ENCODE measurements at regions of chr2 and their contacts with region 1.

Region 1: DNA sequence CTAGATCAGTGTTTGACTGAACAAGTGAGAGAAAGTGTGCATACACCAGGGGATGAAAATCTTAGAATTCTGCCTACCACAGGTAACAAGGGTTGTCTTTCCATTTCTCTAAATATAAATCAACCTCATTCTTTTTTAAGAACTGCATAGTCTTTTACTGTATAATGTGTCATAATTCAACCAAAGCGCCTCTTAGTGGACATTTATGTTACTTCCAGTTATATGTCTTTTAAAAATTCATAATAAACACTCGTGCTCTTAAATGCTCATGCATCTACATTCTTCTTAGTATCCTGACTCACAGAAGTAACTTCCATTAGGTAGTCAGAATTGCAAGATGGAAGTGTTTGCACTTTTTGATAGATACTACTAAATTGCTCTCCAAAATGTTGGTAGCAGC is 76.2 kb downstream of the CHRNA1 start:
- DNase-seq: no peak
- ATAC-seq: no peak
- H3K4me3 ChIP-seq: no peak overlapping the region
- H3K27ac ChIP-seq: no peak overlapping the region
- H3K4me1 ChIP-seq: no peaks in the 10 kb centered on the region
- H3K27me3 ChIP-seq: no peaks in the 10 kb centered on the region

Region 2: DNA sequence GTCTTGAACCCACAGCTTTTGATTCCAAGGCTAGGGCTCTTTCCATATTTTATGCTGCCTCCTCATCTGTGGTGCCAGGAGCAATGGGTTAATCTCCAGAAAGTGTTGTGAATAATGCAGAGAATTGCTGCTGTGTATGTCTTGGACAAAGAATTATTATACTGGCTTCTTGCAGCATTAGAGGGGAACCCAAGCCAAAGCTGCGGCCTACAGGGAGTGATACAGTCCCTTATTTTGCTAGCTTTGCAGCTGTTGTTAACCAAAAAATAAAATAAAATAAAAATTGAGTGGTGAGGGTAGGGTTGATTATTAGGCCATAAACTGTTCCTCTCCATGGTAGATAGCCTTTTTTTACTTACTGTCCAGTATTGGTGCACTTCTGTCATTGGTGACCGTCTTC is 107.1 kb before region 1 on chr2:
- intact Hi-C with region 1: loop called (anchors 2 to 5 kb)
- DNase-seq: no peak
- ATAC-seq: no peak
- H3K4me3 ChIP-seq: no peak overlapping the region
- H3K27ac ChIP-seq: no peak overlapping the region
- H3K4me1 ChIP-seq: peaks cover 2 to 8% of the 10 kb centered on the region in 2 donors
- H3K27me3 ChIP-seq: peaks cover 0 to 2% of the 10 kb centered on the region in 2 donors